Panc1 (cell line): ENCODE measurements at regions of chr2 and their contacts with region 1.

Region 1: DNA sequence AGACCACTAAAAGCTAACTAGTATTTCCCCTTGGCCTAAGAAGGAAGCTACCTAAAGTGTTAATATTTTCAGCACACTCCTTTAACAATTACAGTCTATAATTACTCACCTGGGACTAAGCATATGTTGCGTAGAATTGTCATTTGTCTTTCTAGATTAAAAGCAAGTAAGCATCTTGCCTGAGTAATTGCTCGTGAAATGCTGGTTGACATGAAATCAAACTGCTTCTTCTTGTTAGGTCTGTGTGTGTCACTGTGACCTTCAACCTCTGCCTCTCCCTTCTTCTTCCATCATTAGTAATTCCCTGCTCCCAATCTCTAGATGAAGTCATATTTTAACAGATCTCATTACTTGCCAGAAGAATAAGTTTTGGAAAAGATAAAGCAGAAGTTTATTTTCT is 212.2 kb downstream of the XIRP2 start:
- DNase-seq: no peak
- ATAC-seq: no peak
- H3K4me3 ChIP-seq: no peak overlapping the region
- H3K27ac ChIP-seq: no peak overlapping the region
- H3K4me1 ChIP-seq: no peaks in the 10 kb centered on the region
- H3K27me3 ChIP-seq: no peaks in the 10 kb centered on the region
- CTCF ChIP-seq: no peak

Region 2: GRCh38 chr2:167509586-167509985 is 409.1 kb after region 1 on chr2:
- CTCF ChIA-PET with region 1: no interaction called
- POLR2A ChIA-PET with region 1: interaction called, 13 read pairs
- in situ Hi-C with region 1: no loop called
- intact Hi-C with region 1: no loop called
- DNase-seq: peak; percentile 83
- ATAC-seq: no peak
- H3K4me3 ChIP-seq: no peak overlapping the region
- H3K27ac ChIP-seq: no peak overlapping the region
- H3K4me1 ChIP-seq: no peaks in the 10 kb centered on the region
- H3K27me3 ChIP-seq: no peaks in the 10 kb centered on the region
- CTCF ChIP-seq: no peak